ENCODE measurements at regions of chrX and their contacts with region 1.

Region 1: DNA sequence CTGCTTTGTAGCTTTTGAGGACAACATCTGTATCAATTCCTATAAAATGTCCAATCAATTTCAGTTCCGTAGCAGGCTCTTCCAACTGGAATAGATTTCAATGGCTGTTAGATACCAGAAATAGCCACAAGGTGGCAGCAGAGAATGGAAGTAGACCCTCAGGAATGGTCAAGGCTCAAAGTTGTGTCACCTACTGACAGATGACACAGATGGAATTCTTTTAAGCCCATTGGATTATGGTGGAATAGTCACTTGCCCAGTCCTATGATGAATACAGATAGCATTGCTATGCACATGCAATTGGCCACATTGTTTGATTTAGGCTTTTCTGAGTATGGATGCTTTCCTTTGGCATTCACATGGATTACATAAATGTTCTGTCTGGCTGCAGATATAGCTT is 130.4 kb upstream of the RADX start:
- DNase-seq: peak; percentile 36
- ATAC-seq: no peak
- H3K4me3 Mint-ChIP-seq: no peak overlapping the region
- H3K27ac Mint-ChIP-seq: no peak overlapping the region
- H3K4me1 Mint-ChIP-seq: peaks cover 24% of the 10 kb centered on the region
- H3K27me3 Mint-ChIP-seq: no peaks in the 10 kb centered on the region

Region 2: DNA sequence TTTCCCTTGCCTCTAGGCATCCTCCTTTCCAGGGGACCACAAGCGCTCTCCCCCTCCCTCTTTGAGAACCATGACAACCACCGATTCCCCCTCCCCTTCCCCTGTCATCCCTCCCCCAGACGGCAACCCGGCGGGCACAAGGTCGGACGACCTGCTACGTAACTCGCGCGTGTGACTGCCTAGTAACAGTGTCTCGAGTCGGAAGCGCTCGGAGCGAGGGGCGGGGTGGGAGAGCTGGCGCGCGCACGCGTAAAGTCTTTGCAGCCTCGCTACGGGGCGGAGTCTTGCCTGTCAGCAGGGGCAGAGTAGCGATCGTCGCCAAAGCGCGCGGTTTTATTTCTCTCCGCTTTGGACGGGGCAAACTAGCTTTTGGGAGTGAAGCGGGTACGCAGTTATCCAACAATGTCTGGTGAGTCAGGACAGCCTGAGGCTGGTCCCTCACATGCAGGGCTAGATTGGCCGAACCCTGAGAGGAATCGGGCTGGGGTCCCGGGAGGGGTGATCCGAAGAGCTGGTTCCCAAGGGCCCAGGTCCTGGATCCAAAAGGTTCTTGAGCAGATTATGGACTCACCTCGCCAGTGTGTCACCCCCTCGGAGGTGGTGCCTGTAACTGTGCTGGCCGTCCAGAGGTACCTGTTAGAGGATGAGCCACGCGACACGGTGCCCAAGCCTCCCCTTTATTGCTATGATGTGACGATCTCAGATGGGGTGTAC is 130.5 kb after region 1 on chrX and contains the start of gene RADX:
- CTCF ChIA-PET with region 1: interaction called, 3 read pairs
- POLR2A ChIA-PET with region 1: no interaction called
- intact Hi-C with region 1: loop called (anchors 1 kb)
- DNase-seq: peak; percentile 92
- ATAC-seq: peak; percentile 99
- H3K4me3 Mint-ChIP-seq: peak within 1 kb of the TSS; percentile 81
- H3K27ac Mint-ChIP-seq: peak within 1 kb of the TSS; percentile 86
- H3K4me1 Mint-ChIP-seq: peaks cover 14% of the 10 kb centered on the region
- H3K27me3 Mint-ChIP-seq: no peaks in the 10 kb centered on the region
- total RNA-seq, gene RADX: 9.3 to 14.7 TPM

Region 3: GRCh38 chrX:106707771-106708454 is 226.6 kb after region 1 on chrX:
- CTCF ChIA-PET with region 1: interaction called, 3 read pairs
- POLR2A ChIA-PET with region 1: no interaction called
- intact Hi-C with region 1: loop called in 1 of 2 experiments (anchors 5 kb)
- DNase-seq: no peak
- ATAC-seq: peak; percentile 94
- H3K4me3 Mint-ChIP-seq: no peak overlapping the region
- H3K27ac Mint-ChIP-seq: no peak overlapping the region
- H3K4me1 Mint-ChIP-seq: no peaks in the 10 kb centered on the region
- H3K27me3 Mint-ChIP-seq: no peaks in the 10 kb centered on the region

Region 4: DNA sequence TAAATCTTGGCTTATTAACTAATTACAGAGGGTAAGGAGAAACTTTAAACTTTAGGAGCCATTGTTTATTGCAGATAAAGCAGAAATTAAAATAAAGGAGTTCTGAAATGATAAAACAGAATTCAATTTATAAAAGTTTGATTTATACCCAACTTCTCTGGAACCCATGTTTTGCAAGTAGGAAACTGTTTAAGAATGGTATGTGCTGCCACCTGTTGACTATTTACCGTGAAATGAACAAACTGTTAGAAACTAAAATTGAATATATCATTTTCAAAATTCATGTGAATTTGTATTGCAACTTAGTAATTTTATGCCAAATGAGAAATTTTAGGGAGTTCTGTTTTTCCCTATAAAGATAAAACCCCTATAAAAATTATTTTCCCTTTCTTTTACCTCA is 310.2 kb after region 1 on chrX:
- CTCF ChIA-PET with region 1: no interaction called
- POLR2A ChIA-PET with region 1: no interaction called
- intact Hi-C with region 1: loop called (anchors 1 to 2 kb)
- DNase-seq: no peak
- ATAC-seq: no peak
- H3K4me3 Mint-ChIP-seq: no peak overlapping the region
- H3K27ac Mint-ChIP-seq: no peak overlapping the region
- H3K4me1 Mint-ChIP-seq: no peaks in the 10 kb centered on the region
- H3K27me3 Mint-ChIP-seq: peaks cover 2% of the 10 kb centered on the region

Region 5: GRCh38 chrX:107450823-107451509 is 969.6 kb after region 1 on chrX:
- CTCF ChIA-PET with region 1: no interaction called
- POLR2A ChIA-PET with region 1: no interaction called
- intact Hi-C with region 1: loop called in 1 of 2 experiments (anchors 5 kb)
- DNase-seq: peak; percentile 45
- ATAC-seq: no peak
- H3K4me3 Mint-ChIP-seq: peak overlapping the region; percentile 43
- H3K27ac Mint-ChIP-seq: no peak overlapping the region
- H3K4me1 Mint-ChIP-seq: peaks cover 16% of the 10 kb centered on the region
- H3K27me3 Mint-ChIP-seq: peaks cover 43% of the 10 kb centered on the region